ENCODE measurements at regions of chr11 and their contacts with region 1.

Region 1: GRCh38 chr11:62880803-62881578 is at the start of gene SLC3A2:
- DNase-seq: peak; percentile 86 to 88
- ATAC-seq: peak; percentile 85 to 94
- H3K4me3 ChIP-seq: peak within 1 kb of the TSS; percentile 89
- H3K27ac ChIP-seq: peak within 1 kb of the TSS; percentile 97 to 100
- H3K4me1 ChIP-seq: peaks cover 47% of the 10 kb centered on the region
- CTCF ChIP-seq: peak; percentile 74
- EP300 ChIP-seq: no peak
- POLR2A ChIP-seq: peak; percentile 99
- RAD21 ChIP-seq: peak; percentile 25 to 47; a peak in 4 of 5 replicates
- polyA plus RNA-seq, gene SLC3A2: 1,064 and 1,133 TPM in 2 replicates

Region 2: DNA sequence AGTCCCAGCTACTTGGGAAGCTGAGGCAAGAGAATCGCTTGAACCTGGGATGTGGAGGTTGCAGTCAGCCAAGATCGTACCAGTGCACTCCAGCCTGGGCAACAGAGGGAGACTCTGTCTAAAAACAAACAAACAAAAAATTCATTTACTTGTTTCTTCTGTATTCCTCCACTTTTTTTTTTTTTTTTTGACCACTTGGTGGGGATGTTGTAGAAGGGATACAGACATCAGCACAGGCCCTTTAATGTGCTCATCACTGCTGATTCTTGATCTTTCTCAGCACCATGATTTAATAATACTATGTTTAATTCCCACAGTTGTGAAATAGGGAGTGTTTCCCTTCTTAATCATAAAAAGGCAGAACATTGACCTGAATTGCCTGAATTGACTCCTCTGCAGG is 148.2 kb before region 1 on chr11:
- CTCF ChIA-PET with region 1: no interaction called
- POLR2A ChIA-PET with region 1: interaction called, 11 read pairs
- DNase-seq: peak in 1 of 2 experiments; percentile 56
- ATAC-seq: peak in 1 of 2 experiments; percentile 31; a peak in 2 of 6 replicates
- H3K4me3 ChIP-seq: no peak overlapping the region
- H3K27ac ChIP-seq: no peak overlapping the region
- H3K4me1 ChIP-seq: peaks cover 15% of the 10 kb centered on the region; the same call in 2 of the 3 replicates
- CTCF ChIP-seq: peak; percentile 41
- EP300 ChIP-seq: no peak
- POLR2A ChIP-seq: no peak
- RAD21 ChIP-seq: peak; percentile 40 to 50; a peak in 4 of 5 replicates

Region 3: GRCh38 chr11:62855571-62856332 is 25.2 kb before region 1 on chr11:
- CTCF ChIA-PET with region 1: interaction called, 49 read pairs
- POLR2A ChIA-PET with region 1: interaction called, 42 read pairs
- DNase-seq: peak; percentile 95 to 98
- ATAC-seq: peak; percentile 82 to 89
- H3K4me3 ChIP-seq: peak overlapping the region; percentile 80
- H3K27ac ChIP-seq: peak overlapping the region; percentile 90 to 96
- H3K4me1 ChIP-seq: peaks cover 51% of the 10 kb centered on the region
- CTCF ChIP-seq: no peak
- EP300 ChIP-seq: no peak
- POLR2A ChIP-seq: peak; percentile 95
- RAD21 ChIP-seq: no peak

Region 4: DNA sequence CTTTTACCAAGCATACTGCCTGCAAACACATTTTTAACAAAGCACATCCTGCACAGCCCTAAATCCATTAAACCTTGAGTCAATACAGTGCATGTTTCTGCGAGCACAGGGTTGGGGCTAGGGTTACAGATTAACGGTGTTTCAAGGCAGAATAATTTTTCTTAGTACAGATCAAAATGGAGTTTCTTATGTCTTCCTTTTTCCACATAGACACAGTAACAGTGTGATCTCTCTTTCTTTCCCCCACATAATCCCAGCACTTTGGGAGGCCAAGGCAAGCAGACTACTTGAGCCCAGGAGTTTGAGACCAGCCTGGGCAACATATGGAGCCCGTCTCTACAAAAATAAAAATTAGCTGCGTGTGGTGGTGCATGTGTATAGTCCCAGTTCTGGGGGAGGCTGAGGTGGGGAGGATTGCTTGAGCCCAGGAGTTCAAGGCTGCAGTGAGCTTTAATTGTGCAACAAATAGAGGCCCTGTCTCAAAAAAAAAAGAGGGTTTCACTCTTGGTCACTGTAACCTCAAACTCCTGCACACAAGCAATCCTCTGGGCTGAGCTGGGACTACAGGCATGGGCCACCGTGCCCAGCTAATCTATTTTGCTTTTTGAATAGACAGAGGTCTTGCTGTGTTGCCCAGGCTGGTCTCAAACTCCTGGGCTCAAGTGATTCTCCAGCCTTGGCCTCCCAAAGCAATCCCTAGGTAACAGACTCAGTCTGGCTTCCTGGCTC is 20.0 kb before region 1 on chr11:
- CTCF ChIA-PET with region 1: interaction called, 49 read pairs
- POLR2A ChIA-PET with region 1: interaction called, 42 read pairs
- DNase-seq: no peak
- ATAC-seq: no peak
- H3K4me3 ChIP-seq: no peak overlapping the region
- H3K27ac ChIP-seq: peak overlapping the region in 1 of 2 experiments; percentile 23; a peak in 3 of 6 replicates
- H3K4me1 ChIP-seq: peaks cover 33% of the 10 kb centered on the region
- CTCF ChIP-seq: no peak
- EP300 ChIP-seq: no peak
- POLR2A ChIP-seq: no peak
- RAD21 ChIP-seq: no peak

Region 5: DNA sequence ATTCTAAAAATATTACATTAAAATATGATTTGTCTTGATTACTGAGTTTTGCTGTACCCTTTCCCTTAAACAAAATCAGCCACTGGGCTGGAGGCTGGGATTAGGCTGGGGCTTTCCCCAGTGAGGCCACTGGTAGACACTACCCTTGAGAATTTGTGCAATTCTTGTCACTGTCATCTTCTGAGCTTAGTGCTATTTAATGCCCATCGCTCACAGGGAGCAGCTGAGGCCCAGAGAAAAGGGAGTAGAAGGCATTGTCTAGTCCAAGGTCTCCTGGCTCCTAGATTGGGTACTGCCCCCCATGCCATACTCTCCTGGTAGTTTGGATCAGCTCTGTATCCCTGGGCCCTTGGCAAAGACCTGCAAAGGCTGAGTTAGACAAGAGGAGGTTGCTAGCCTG is 33.4 kb after region 1 on chr11:
- CTCF ChIA-PET with region 1: no interaction called
- POLR2A ChIA-PET with region 1: no interaction called
- DNase-seq: no peak
- ATAC-seq: no peak
- H3K4me3 ChIP-seq: no peak overlapping the region
- H3K27ac ChIP-seq: no peak overlapping the region
- H3K4me1 ChIP-seq: no peaks in the 10 kb centered on the region
- CTCF ChIP-seq: no peak
- EP300 ChIP-seq: no peak
- POLR2A ChIP-seq: no peak
- RAD21 ChIP-seq: no peak